Gastrocnemius medialis (tissue), 4 donors: ENCODE measurements at regions of chr10 and their contacts with region 1.

Region 1: DNA sequence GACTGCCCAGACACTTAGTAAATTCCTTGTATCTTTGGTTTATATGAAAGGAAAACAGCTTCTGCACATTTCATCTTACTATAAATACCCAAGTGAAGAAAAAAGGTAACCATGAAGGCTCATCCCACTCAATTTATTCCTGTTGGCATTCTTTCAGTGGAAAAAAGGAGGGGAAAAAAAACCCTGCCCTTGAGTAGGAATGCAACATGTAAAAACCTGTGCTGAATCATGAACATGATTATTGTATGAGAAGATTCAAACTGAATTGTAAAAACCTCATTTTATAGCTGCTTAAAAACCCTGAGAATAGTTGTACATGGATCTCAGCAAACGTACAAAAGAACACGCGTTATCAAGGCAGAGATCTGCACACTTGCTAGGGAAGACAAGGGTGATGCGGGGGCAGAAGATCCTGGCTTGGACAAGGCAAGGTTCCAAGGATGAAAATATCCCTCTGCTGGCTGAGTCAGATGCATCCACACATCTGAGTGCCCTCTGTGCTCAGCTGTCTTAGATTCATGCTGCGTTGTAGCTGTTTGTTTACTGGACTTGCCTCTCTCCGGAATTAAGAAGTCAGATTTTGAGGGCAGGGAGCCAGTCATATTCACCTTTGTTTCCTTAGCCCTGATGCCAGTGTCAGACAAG is 658.2 kb downstream of the PARD3 start:
- DNase-seq: no peak
- ATAC-seq: peak; percentile 58 to 75
- H3K4me3 ChIP-seq: no peak overlapping the region
- H3K27ac ChIP-seq: no peak overlapping the region
- H3K4me1 ChIP-seq: peaks cover 4 to 6% of the 10 kb centered on the region in 2 donors
- H3K27me3 ChIP-seq: no peaks in the 10 kb centered on the region
- CTCF ChIP-seq: no peak
- POLR2A ChIP-seq: no peak

Region 2: DNA sequence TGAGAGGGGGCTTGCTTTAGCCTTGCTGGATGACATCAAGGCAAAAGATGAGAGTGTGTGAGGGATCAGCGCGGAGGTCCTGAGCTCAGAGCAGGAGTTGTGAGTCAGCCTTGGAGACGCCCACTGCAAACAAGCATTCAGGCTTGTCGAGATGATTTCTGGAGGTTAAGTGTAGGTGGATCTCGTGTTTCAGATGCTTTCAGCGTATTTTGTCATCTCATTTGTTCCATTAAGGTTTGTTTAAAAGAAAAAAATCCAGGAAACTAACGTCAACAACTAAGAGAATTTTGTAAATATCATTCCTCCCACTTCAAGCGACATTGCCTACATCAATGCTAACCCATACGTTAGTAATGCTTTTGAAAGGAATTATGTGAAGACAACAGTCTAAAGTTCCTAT is 107.0 kb before region 1 on chr10:
- in situ Hi-C with region 1: loop called in 1 of 4 experiments (anchors 25 kb)
- intact Hi-C with region 1: no loop called
- DNase-seq: no peak
- ATAC-seq: no peak
- H3K4me3 ChIP-seq: no peak overlapping the region
- H3K27ac ChIP-seq: no peak overlapping the region
- H3K4me1 ChIP-seq: no peaks in the 10 kb centered on the region
- H3K27me3 ChIP-seq: no peaks in the 10 kb centered on the region
- CTCF ChIP-seq: no peak
- POLR2A ChIP-seq: no peak

Region 3: GRCh38 chr10:34109952-34110702 is 46.8 kb before region 1 on chr10:
- in situ Hi-C with region 1: no loop called
- intact Hi-C with region 1: no loop called
- DNase-seq: no peak
- ATAC-seq: no peak
- H3K4me3 ChIP-seq: no peak overlapping the region
- H3K27ac ChIP-seq: no peak overlapping the region
- H3K4me1 ChIP-seq: no peaks in the 10 kb centered on the region
- H3K27me3 ChIP-seq: no peaks in the 10 kb centered on the region
- CTCF ChIP-seq: no peak
- POLR2A ChIP-seq: no peak

Region 4: GRCh38 chr10:34213193-34213804 is 56.4 kb after region 1 on chr10:
- in situ Hi-C with region 1: no loop called
- intact Hi-C with region 1: no loop called
- DNase-seq: no peak
- ATAC-seq: no peak
- H3K4me3 ChIP-seq: no peak overlapping the region
- H3K27ac ChIP-seq: no peak overlapping the region
- H3K4me1 ChIP-seq: no peaks in the 10 kb centered on the region
- H3K27me3 ChIP-seq: no peaks in the 10 kb centered on the region
- CTCF ChIP-seq: no peak
- POLR2A ChIP-seq: no peak